ENCODE measurements at regions of chr11 and their contacts with region 1.

Region 1: DNA sequence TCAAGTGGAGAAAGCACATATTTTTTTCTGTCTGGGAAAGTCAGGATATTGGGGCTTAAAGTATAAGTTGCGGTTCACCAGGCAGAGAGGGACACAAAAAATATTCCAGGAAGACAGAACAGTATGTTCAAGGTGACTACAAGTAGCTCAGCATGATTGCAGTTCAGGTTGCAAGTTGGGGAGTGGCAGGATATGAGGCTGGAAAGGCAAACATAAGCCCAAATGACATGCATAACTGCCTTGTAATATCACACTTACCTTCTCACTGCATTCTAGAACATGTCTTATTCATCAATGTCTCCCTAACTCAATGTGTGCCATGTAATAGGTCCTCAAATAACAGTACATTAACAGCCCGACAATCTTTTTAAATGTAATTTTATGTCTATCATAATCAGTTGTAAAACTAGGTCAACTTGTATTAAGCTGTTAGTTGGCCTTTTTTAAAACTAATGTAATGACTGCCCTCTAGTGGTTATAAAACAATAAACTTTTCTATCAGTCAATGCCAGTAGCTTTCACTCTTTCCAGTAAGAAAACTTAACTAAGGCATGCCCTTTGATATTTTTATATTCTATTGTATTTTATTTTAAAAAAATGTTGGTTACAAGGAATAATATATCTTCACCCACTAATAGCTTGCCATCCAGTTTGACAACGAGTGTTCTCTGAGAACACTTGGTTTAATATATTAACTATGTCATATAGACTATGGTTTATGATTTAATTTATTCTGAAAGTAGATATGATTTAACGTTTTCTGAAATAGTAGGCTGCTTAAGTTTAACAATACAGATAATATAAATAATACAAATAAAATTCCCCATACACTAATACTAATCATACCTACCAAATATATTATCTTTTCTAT is 39.4 kb upstream of the CFAP300 start:
- DNase-seq: peak in 3 of 14 experiments; percentile 37 to 57 (median 46)
- ATAC-seq: no peak
- H3K4me3 ChIP-seq: no peak overlapping the region
- H3K4me3 Mint-ChIP-seq: no peak overlapping the region
- H3K27ac ChIP-seq: no peak overlapping the region
- H3K27ac Mint-ChIP-seq: no peak overlapping the region
- H3K4me1 ChIP-seq: no peaks in the 10 kb centered on the region
- H3K4me1 Mint-ChIP-seq: no peaks in the 10 kb centered on the region
- H3K27me3 ChIP-seq: peaks cover 0 to 4% of the 10 kb centered on the region in 2 experiments
- H3K27me3 Mint-ChIP-seq: peaks cover 12% of the 10 kb centered on the region
- CTCF ChIP-seq: peak; percentile 78

Region 2: DNA sequence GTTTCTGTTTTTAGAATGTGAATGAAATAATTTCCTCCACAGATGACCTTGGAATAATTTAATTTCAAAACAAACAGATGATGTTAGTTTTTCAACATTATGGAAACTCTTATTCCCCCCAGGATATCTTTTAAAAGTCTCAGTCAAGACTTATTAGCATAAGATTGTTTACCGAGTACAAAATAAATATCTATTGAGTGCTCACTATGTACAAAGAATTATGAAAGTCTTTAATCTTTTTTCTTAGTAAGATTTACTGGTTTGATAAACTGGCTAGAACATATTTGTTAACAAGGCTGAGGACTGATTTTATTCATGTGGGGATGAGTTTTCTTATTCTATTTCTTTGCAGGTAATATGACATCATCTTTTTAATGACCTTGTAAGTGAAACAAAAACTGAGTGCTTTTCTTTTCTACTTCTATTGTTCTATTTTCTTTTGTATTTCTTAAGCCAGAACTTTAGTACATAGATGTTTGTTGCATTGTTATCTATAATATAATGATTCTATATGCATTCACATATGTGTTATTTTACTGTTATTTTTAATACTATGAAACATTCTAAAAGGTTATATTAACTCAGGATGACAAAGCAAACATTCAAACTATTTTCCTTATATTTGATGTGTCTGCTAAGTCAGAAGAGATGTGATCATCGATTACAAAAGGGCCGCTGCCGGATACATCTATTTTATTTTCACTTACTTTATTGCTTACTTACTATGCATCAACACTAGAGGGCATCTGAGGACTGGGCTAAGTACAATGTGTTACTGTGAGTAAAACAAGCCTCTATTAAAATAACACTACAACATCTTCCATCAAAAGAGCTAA is 1431.7 kb before region 1 on chr11:
- CTCF ChIA-PET with region 1: no interaction called
- POLR2A ChIA-PET with region 1: no interaction called
- intact Hi-C with region 1: loop called in 1 of 2 experiments (anchors 5 kb)
- DNase-seq: peak in 2 of 14 experiments; percentile 3 to 4
- ATAC-seq: no peak
- H3K4me3 ChIP-seq: no peak overlapping the region
- H3K4me3 Mint-ChIP-seq: no peak overlapping the region
- H3K27ac ChIP-seq: no peak overlapping the region
- H3K27ac Mint-ChIP-seq: no peak overlapping the region
- H3K4me1 ChIP-seq: no peaks in the 10 kb centered on the region
- H3K4me1 Mint-ChIP-seq: no peaks in the 10 kb centered on the region
- H3K27me3 ChIP-seq: no peaks in the 10 kb centered on the region
- H3K27me3 Mint-ChIP-seq: no peaks in the 10 kb centered on the region
- CTCF ChIP-seq: no peak

Region 3: DNA sequence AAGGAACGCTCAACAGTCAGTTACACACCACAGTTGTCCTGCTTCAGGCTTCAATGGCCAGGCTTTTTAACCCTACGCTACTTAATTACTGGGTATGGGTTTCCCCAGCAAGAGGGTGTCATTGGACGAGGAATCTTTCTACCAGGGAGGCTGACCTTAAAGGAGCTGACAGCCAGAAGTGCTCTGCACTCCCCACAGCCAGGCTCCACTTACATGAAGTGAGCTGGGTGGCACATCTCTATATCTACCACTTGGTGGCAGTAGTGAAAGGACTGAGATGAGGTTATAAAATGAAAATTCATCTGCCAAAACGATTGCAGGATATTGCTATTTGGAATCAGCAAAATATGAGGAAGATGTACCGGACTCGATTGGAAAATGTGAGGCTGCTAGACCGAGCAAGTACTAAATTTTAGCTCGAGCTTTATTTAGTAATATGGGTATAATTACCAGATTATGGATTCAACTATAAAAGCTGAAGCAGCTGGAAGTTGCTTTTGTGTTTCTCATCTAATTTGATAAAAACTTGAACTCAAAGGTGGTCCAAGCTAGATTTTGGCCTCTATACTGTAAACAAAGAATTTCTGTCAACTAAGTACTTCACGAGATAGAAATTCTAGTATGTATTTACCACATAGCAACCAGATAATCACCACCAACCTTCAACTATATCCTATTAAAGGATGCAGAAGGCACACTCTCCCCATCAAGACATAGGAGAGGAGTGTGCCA is 146.9 kb before region 1 on chr11:
- CTCF ChIA-PET with region 1: interaction called, 30 read pairs
- POLR2A ChIA-PET with region 1: no interaction called
- intact Hi-C with region 1: loop called (anchors 1 kb)
- DNase-seq: peak in 10 of 14 experiments; percentile 0 to 52 (median 14)
- ATAC-seq: peak; percentile 48
- H3K4me3 ChIP-seq: no peak overlapping the region
- H3K4me3 Mint-ChIP-seq: no peak overlapping the region
- H3K27ac ChIP-seq: no peak overlapping the region
- H3K27ac Mint-ChIP-seq: no peak overlapping the region
- H3K4me1 ChIP-seq: no peaks in the 10 kb centered on the region
- H3K4me1 Mint-ChIP-seq: no peaks in the 10 kb centered on the region
- H3K27me3 ChIP-seq: peaks cover 0 to 8% of the 10 kb centered on the region in 2 experiments
- H3K27me3 Mint-ChIP-seq: peaks cover 21% of the 10 kb centered on the region
- CTCF ChIP-seq: peak; percentile 72

Region 4: GRCh38 chr11:101914738-101915426 is 92.9 kb before region 1 on chr11 and contains the start of gene CEP126:
- CTCF ChIA-PET with region 1: interaction called, 3 read pairs
- POLR2A ChIA-PET with region 1: no interaction called
- intact Hi-C with region 1: loop called in 1 of 2 experiments (anchors 5 kb)
- DNase-seq: peak; percentile 81 to 96 (median 92)
- ATAC-seq: peak; percentile 88
- H3K4me3 ChIP-seq: peak within 1 kb of the TSS; percentile 75
- H3K4me3 Mint-ChIP-seq: peak within 1 kb of the TSS; percentile 96
- H3K27ac ChIP-seq: peak within 1 kb of the TSS; percentile 64 to 69
- H3K27ac Mint-ChIP-seq: peak within 1 kb of the TSS; percentile 87
- H3K4me1 ChIP-seq: peaks cover 10% of the 10 kb centered on the region
- H3K4me1 Mint-ChIP-seq: peaks cover 25% of the 10 kb centered on the region
- H3K27me3 ChIP-seq: no peaks in the 10 kb centered on the region
- H3K27me3 Mint-ChIP-seq: peaks cover 4% of the 10 kb centered on the region
- CTCF ChIP-seq: peak; percentile 9
- total RNA-seq, gene CEP126: 0.96 to 1.2 TPM